ENCODE measurements at regions of chr3 and their contacts with region 1.

Region 1: DNA sequence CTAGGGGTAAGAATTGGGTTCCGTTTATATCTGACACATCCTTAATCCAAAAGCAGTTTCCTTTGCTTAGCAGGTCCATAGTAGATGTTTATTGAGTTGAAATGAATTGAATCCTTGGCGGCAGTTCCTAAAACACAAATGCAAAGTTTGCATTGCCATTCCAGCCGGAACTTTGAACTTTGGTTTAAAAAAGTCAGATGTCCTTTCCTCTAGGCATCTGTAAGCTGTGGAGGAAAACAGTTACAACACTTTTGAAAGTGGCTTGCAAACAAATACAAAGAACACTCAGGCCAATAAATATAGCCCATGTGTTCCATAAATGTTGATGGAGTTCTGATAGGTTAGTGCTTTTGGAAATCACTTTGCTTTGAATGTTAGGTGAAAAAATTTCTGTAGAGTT is 374.7 kb upstream of the RARB start:
- DNase-seq: no peak
- H3K4me3 ChIP-seq: no peak overlapping the region
- H3K27ac ChIP-seq: no peak overlapping the region
- H3K4me1 ChIP-seq: peaks cover 0 to 6% (median 2%) of the 10 kb centered on the region in 4 donors
- H3K27me3 ChIP-seq: no peaks in the 10 kb centered on the region
- CTCF ChIP-seq: no peak

Region 2: GRCh38 chr3:24748520-24748919 is 304.8 kb before region 1 on chr3:
- intact Hi-C with region 1: no loop called
- DNase-seq: no peak
- H3K4me3 ChIP-seq: no peak overlapping the region
- H3K27ac ChIP-seq: no peak overlapping the region
- H3K4me1 ChIP-seq: no peaks in the 10 kb centered on the region
- H3K27me3 ChIP-seq: no peaks in the 10 kb centered on the region
- CTCF ChIP-seq: no peak

Region 3: DNA sequence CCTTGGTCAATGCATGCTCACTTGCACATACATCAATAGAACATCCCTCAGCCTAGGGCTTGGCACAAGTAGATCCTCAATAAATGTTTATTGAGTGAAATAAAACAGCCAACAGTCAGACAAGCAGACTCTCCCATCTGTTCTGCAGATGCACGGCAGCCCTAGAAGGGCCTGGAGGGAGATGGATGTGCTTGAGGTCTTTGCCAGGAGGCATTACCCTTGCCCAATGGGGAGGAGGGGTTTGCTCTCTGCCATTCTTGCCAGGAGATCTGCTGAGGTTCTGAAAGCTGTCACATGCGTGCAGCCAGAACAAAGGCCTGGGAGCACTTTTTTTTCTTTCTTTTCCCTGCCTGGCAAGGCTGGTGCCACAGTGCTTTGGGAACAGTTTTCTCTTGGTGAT is 209.4 kb before region 1 on chr3:
- intact Hi-C with region 1: no loop called
- DNase-seq: no peak
- H3K4me3 ChIP-seq: no peak overlapping the region
- H3K27ac ChIP-seq: no peak overlapping the region
- H3K4me1 ChIP-seq: no peaks in the 10 kb centered on the region
- H3K27me3 ChIP-seq: no peaks in the 10 kb centered on the region
- CTCF ChIP-seq: no peak

Region 4: GRCh38 chr3:24914036-24914435 is 139.3 kb before region 1 on chr3:
- intact Hi-C with region 1: loop called (anchors 5 kb)
- DNase-seq: no peak
- H3K4me3 ChIP-seq: no peak overlapping the region
- H3K27ac ChIP-seq: no peak overlapping the region
- H3K4me1 ChIP-seq: no peaks in the 10 kb centered on the region
- H3K27me3 ChIP-seq: no peaks in the 10 kb centered on the region
- CTCF ChIP-seq: no peak